Activated T-helper 2 cell treated with anti-CD3 and anti-CD28 coated beads, Interferon-gamma antibody, Interleukin-2, Interleukin-4, amounts not matched to agents 10 μg/mL and 5 μg/mL and 100 μg/mL, durations not matched to agents 14 hours and 24 hours and 36 hours (primary cell): ENCODE measurements at regions of chrX and their contacts with region 1.

Region 1: GRCh38 chrX:11787564-11787963 is 29.5 kb downstream of the MSL3 start:
- DNase-seq: peak; percentile 51
- H3K4me3 Mint-ChIP-seq: peak overlapping the region; percentile 52
- H3K27ac Mint-ChIP-seq: no peak overlapping the region
- H3K4me1 Mint-ChIP-seq: peaks cover 13% of the 10 kb centered on the region
- H3K27me3 Mint-ChIP-seq: no peaks in the 10 kb centered on the region

Region 2: DNA sequence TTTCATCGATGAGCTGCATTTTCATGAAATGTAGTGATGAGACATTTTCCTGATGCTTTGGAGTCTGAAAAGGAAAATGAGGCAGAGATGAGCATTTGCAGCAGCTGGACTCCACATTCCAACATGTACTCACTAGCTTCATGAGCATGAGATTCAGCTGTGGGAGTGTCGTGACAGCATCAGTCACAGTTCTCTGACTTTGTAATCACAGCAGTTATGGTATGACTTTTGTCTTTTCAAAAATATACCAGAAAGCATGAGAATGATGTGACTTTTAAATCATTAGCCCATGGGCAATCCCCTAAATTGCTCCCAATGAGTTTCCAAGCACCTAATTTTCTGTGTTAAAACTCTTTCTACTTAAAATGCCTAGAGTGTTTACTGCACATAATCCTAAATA is 47.8 kb before region 1 on chrX:
- intact Hi-C with region 1: no loop called
- DNase-seq: no peak
- H3K4me3 Mint-ChIP-seq: no peak overlapping the region
- H3K27ac Mint-ChIP-seq: no peak overlapping the region
- H3K4me1 Mint-ChIP-seq: no peaks in the 10 kb centered on the region
- H3K27me3 Mint-ChIP-seq: peaks cover 10% of the 10 kb centered on the region

Region 3: DNA sequence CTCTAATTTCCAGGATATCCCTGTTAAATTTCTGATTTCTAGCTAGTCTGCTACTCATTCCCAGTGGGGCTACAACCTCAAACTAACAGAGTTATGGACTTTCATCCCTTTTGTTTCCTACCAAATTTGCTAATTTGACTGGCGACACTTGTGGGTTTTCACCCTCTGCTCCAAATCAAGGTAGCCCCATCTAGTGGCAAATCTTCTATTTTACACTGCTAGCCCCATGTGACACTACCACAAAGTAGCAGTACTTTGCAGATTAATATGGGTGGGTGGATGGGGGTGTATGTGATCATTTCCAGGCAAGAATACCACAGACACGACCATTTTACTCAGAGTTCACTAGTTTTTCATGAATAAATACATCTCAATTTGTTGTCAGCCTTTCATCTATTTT is 120.8 kb after region 1 on chrX:
- intact Hi-C with region 1: loop called (anchors 1 kb)
- DNase-seq: peak; percentile 8
- H3K4me3 Mint-ChIP-seq: no peak overlapping the region
- H3K27ac Mint-ChIP-seq: no peak overlapping the region
- H3K4me1 Mint-ChIP-seq: no peaks in the 10 kb centered on the region
- H3K27me3 Mint-ChIP-seq: peaks cover 2% of the 10 kb centered on the region